Activated CD8-positive, alpha-beta memory T cell treated with anti-CD3 and anti-CD28 coated beads, Interleukin-2, amount 10 ng/mL, durations not matched to agents 7 days and 5 days (primary cell): ENCODE measurements at regions of chr2 and their contacts with region 1.

Region 1: GRCh38 chr2:237674731-237675276 is 47.4 kb downstream of the LRRFIP1 start:
- DNase-seq: peak; percentile 90
- ATAC-seq: peak; percentile 80
- H3K4me3 Mint-ChIP-seq: peak overlapping the region; percentile 75
- H3K27ac Mint-ChIP-seq: peak overlapping the region; percentile 87
- H3K4me1 Mint-ChIP-seq: peaks cover 47% of the 10 kb centered on the region
- H3K27me3 Mint-ChIP-seq: peaks cover 2% of the 10 kb centered on the region

Region 2: GRCh38 chr2:237383991-237384671 is 290.7 kb before region 1 on chr2:
- CTCF ChIA-PET with region 1: no interaction called
- DNase-seq: no peak
- ATAC-seq: no peak
- H3K4me3 Mint-ChIP-seq: no peak overlapping the region
- H3K27ac Mint-ChIP-seq: no peak overlapping the region
- H3K4me1 Mint-ChIP-seq: no peaks in the 10 kb centered on the region
- H3K27me3 Mint-ChIP-seq: no peaks in the 10 kb centered on the region

Region 3: GRCh38 chr2:237685408-237685807 is 10.6 kb after region 1 on chr2:
- CTCF ChIA-PET with region 1: interaction called, 210 read pairs
- DNase-seq: no peak
- ATAC-seq: no peak
- H3K4me3 Mint-ChIP-seq: no peak overlapping the region
- H3K27ac Mint-ChIP-seq: no peak overlapping the region
- H3K4me1 Mint-ChIP-seq: peaks cover 45% of the 10 kb centered on the region
- H3K27me3 Mint-ChIP-seq: no peaks in the 10 kb centered on the region

Region 4: DNA sequence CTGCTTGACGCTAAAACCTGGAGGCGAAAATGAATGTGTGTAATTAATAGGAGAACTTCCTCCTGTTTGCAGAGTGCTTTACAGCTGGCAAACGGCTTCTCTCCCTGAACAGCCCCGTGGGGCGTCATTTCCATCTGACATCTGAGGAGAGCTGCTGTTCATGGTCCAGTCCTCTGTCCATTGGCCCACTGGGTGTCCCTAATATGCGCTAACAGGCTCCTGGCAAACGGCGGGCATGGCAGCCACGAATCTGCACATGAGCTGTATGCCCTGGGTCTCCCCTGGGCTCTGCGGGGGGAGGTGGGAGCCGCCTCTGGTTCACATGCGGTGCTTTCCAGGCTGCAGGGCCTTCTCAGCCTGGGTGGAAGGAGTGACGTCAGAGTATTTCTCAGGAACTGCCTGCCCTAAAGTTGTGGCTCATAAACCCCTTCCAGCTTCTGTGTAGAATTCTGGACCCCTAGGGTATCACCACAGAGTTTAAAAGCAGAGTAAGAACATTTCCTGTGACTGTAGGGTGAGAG is 25.8 kb after region 1 on chr2:
- CTCF ChIA-PET with region 1: interaction called, 210 read pairs
- DNase-seq: peak; percentile 76
- ATAC-seq: peak; percentile 38
- H3K4me3 Mint-ChIP-seq: peak overlapping the region; percentile 55
- H3K27ac Mint-ChIP-seq: peak overlapping the region; percentile 82
- H3K4me1 Mint-ChIP-seq: peaks cover 94% of the 10 kb centered on the region
- H3K27me3 Mint-ChIP-seq: no peaks in the 10 kb centered on the region

Region 5: DNA sequence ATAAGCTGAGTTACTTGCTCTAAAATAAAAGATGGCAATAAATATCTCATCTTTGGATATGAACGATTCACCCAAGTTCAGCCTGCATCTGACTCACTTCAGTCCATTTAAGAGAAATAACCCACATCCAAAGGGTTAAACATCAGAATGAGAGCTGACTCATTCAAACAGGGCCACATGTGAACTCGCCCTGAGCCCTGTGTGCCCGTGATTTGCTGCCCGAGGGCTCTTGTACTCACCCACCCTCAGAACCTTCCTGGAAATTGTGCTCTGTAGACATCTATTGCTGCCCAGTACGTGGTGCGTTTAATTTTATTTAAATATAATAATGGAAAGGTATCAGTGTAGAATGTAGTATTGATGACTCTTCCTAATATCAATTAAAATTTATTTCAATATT is 56.9 kb after region 1 on chr2:
- CTCF ChIA-PET with region 1: interaction called, 18 read pairs
- DNase-seq: peak; percentile 68
- ATAC-seq: peak; percentile 92
- H3K4me3 Mint-ChIP-seq: no peak overlapping the region
- H3K27ac Mint-ChIP-seq: peak overlapping the region; percentile 73
- H3K4me1 Mint-ChIP-seq: peaks cover 53% of the 10 kb centered on the region
- H3K27me3 Mint-ChIP-seq: no peaks in the 10 kb centered on the region

Region 6: DNA sequence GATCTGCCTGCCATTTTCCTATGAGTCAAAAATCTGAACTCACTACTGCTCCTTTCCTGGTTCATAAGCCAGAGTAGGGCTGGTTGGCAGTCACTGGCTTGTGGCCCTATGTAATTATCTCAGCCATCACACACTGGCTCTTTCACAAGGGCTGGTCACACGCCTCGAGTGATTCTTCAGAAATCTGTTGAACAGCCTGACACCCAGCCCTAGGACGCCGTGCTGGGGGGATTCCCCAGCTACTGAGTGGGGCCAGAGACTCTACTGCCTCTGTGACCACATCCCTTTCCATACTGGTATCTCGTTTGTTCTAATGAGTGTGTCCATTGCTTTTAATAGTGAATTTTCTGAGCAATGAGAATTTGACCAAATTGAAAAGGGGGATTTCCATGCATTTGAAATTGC is 78.0 kb after region 1 on chr2:
- CTCF ChIA-PET with region 1: interaction called, 134 read pairs
- DNase-seq: peak; percentile 73
- ATAC-seq: peak; percentile 95
- H3K4me3 Mint-ChIP-seq: no peak overlapping the region
- H3K27ac Mint-ChIP-seq: peak overlapping the region; percentile 69
- H3K4me1 Mint-ChIP-seq: peaks cover 30% of the 10 kb centered on the region
- H3K27me3 Mint-ChIP-seq: no peaks in the 10 kb centered on the region